Psoas muscle (tissue), 8 donors: ENCODE measurements at regions of chrX and their contacts with region 1.

Region 1: GRCh38 chrX:109714340-109714958 is 18.6 kb downstream of the ACSL4 start:
- DNase-seq: no peak
- ATAC-seq: no peak
- H3K4me3 ChIP-seq: no peak overlapping the region
- H3K27ac ChIP-seq: no peak overlapping the region
- H3K4me1 ChIP-seq: peaks cover 13% of the 10 kb centered on the region
- H3K27me3 ChIP-seq: no peaks in the 10 kb centered on the region
- CTCF ChIP-seq: no peak

Region 2: GRCh38 chrX:109696146-109696740 is 18.2 kb before region 1 on chrX:
- intact Hi-C with region 1: no loop called
- DNase-seq: no peak
- ATAC-seq: no peak
- H3K4me3 ChIP-seq: no peak overlapping the region
- H3K27ac ChIP-seq: no peak overlapping the region
- H3K4me1 ChIP-seq: no peaks in the 10 kb centered on the region
- H3K27me3 ChIP-seq: peaks cover 0 to 8% (median 0%) of the 10 kb centered on the region in 3 donors
- CTCF ChIP-seq: no peak

Region 3: GRCh38 chrX:109856974-109857373 is 142.5 kb after region 1 on chrX:
- intact Hi-C with region 1: loop called (anchors 5 kb)
- DNase-seq: no peak
- ATAC-seq: no peak
- H3K4me3 ChIP-seq: no peak overlapping the region
- H3K27ac ChIP-seq: no peak overlapping the region
- H3K4me1 ChIP-seq: no peaks in the 10 kb centered on the region
- H3K27me3 ChIP-seq: peaks cover 0 to 2% (median 0%) of the 10 kb centered on the region in 3 donors
- CTCF ChIP-seq: peak; percentile 80

Region 4: GRCh38 chrX:109886122-109886761 is 171.8 kb after region 1 on chrX:
- intact Hi-C with region 1: loop called (anchors 10 kb)
- DNase-seq: no peak
- ATAC-seq: peak in 1 of 4 donors; percentile 63
- H3K4me3 ChIP-seq: no peak overlapping the region
- H3K27ac ChIP-seq: no peak overlapping the region
- H3K4me1 ChIP-seq: no peaks in the 10 kb centered on the region
- H3K27me3 ChIP-seq: peaks cover 0 to 6% (median 0%) of the 10 kb centered on the region in 3 donors
- CTCF ChIP-seq: peak; percentile 59